ENCODE measurements at regions of chr14 and their contacts with region 1.

Region 1: GRCh38 chr14:49966304-49966809 is 73.5 kb downstream of the ARF6 start:
- DNase-seq: peak; percentile 84
- ATAC-seq: peak; percentile 100
- H3K4me3 ChIP-seq: peak overlapping the region; percentile 18 to 45 (median 40); a peak in 5 of 6 replicates
- H3K27ac ChIP-seq: peak overlapping the region; percentile 86
- H3K4me1 ChIP-seq: peaks cover 68% of the 10 kb centered on the region
- H3K27me3 ChIP-seq: no peaks in the 10 kb centered on the region
- CTCF ChIP-seq: no peak
- EP300 ChIP-seq: no peak
- POLR2A ChIP-seq: peak; percentile 61 to 64
- RAD21 ChIP-seq: no peak

Region 2: GRCh38 chr14:49977126-49977841 is 10.9 kb after region 1 on chr14:
- CTCF ChIA-PET with region 1: no interaction called
- POLR2A ChIA-PET with region 1: interaction called, 10 read pairs
- in situ Hi-C with region 1: no loop called
- intact Hi-C with region 1: no loop called
- DNase-seq: no peak
- ATAC-seq: no peak
- H3K4me3 ChIP-seq: no peak overlapping the region
- H3K27ac ChIP-seq: no peak overlapping the region
- H3K4me1 ChIP-seq: peaks cover 53% of the 10 kb centered on the region
- H3K27me3 ChIP-seq: no peaks in the 10 kb centered on the region
- CTCF ChIP-seq: no peak
- EP300 ChIP-seq: no peak
- POLR2A ChIP-seq: no peak
- RAD21 ChIP-seq: no peak

Region 3: GRCh38 chr14:49986340-49987014 is 20.1 kb after region 1 on chr14:
- CTCF ChIA-PET with region 1: no interaction called
- POLR2A ChIA-PET with region 1: interaction called, 23 read pairs
- in situ Hi-C with region 1: no loop called
- intact Hi-C with region 1: loop called (anchors 2 kb)
- DNase-seq: peak; percentile 52
- ATAC-seq: peak; percentile 55
- H3K4me3 ChIP-seq: peak overlapping the region; percentile 24 to 48 (median 36); a peak in 4 of 6 replicates
- H3K27ac ChIP-seq: peak overlapping the region; percentile 98
- H3K4me1 ChIP-seq: peaks cover 73% of the 10 kb centered on the region
- H3K27me3 ChIP-seq: no peaks in the 10 kb centered on the region
- CTCF ChIP-seq: no peak
- EP300 ChIP-seq: no peak
- POLR2A ChIP-seq: no peak
- RAD21 ChIP-seq: no peak

Region 4: DNA sequence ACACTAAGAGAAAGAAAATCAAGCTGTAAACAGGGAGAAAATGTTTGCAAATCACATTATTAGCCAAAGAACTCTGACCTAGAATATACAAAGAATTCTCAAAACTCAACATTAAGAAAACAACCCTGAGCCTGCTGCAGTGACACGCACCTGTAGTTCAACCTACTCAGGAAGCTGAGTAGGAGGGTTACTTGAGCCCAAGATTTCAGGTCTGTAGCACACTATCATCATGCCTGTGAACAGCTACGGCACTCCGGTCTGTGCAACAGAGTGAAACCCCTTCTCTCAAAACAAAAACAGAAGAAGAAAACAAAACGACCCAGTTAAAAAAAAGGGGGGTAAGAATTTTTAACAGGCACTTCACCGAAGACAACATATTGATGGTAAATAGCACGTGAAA is 680.9 kb after region 1 on chr14:
- CTCF ChIA-PET with region 1: no interaction called
- POLR2A ChIA-PET with region 1: no interaction called
- in situ Hi-C with region 1: no loop called
- intact Hi-C with region 1: no loop called
- DNase-seq: no peak
- ATAC-seq: no peak
- H3K4me3 ChIP-seq: no peak overlapping the region
- H3K27ac ChIP-seq: no peak overlapping the region
- H3K4me1 ChIP-seq: peaks cover 16% of the 10 kb centered on the region
- H3K27me3 ChIP-seq: no peaks in the 10 kb centered on the region
- CTCF ChIP-seq: no peak
- EP300 ChIP-seq: no peak
- POLR2A ChIP-seq: no peak
- RAD21 ChIP-seq: no peak

Measured in HepG2 (cell line).